ENCODE measurements at regions of chr10 and their contacts with region 1.

Region 1: GRCh38 chr10:128150045-128150493 is 23.8 kb upstream of the MKI67 start:
- DNase-seq: no peak
- H3K4me3 ChIP-seq: peak overlapping the region; percentile 66
- CTCF ChIP-seq: peak; percentile 97

Region 2: DNA sequence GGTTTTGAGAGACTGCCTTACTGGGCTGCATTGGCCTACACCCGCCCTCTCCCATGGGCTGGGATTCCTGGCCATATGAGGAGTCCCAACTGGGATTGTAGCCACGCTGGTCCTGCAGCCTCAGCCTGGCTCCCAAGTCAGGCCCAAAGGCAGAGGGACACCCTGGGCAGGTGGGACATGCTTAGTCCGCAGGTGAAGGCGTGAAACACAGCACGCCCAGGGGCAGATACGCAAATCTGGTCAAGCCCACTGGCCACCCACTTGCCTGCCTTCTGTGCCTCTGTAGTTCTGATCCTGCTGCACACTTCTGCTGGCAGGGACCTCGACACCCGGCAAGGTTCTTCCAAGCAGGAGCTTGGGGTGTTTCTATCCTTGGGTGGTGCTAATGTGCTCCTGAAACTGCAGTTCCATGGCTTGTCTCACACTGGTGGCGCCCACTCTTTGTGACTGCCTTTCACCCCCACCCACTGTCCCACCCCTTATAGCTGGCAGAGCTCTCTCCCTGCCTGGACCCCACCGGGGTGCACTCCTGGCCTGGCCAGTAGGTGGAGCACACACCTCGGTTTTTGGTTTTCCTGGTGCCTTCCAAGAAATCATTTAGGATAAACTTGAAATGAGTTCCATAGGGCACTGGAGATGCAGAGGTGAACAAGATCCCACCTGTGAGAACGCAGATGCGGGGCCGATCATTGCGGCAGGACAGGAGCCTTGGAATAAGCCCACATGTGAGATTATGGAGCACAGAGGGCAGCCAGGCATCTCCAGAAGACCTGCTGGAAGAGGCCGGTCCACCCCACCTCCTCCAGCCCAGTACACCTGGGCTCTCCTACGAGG is 71.7 kb before region 1 on chr10:
- CTCF ChIA-PET with region 1: interaction called, 111 read pairs
- POLR2A ChIA-PET with region 1: no interaction called
- DNase-seq: no peak
- H3K4me3 ChIP-seq: no peak overlapping the region
- CTCF ChIP-seq: peak; percentile 79

Region 3: GRCh38 chr10:128130051-128130450 is 20.0 kb before region 1 on chr10:
- CTCF ChIA-PET with region 1: interaction called, 13 read pairs
- POLR2A ChIA-PET with region 1: no interaction called
- DNase-seq: no peak
- H3K4me3 ChIP-seq: no peak overlapping the region
- CTCF ChIP-seq: no peak

Region 4: DNA sequence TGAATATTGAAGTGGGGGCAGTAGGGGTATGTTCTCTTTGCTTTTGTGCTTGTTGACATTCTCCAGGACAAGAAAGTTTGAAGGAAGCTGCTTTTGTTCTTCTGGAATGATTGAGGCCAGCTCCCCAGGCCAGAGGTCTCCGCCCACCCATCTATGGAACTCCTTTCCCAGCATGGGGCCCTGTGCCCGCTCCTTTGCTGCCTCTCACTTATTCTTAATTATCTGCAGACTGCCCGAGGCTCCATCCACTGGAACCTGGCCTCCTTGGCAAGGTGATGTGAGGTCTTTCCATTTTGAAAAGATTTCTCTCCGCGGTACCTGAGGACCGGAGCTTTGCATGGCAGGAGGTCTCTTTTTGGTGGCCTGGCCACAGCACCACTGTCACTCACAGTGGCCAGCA is 15.5 kb after region 1 on chr10:
- CTCF ChIA-PET with region 1: interaction called, 10 read pairs
- POLR2A ChIA-PET with region 1: no interaction called
- DNase-seq: no peak
- H3K4me3 ChIP-seq: no peak overlapping the region
- CTCF ChIP-seq: no peak